Dorsolateral prefrontal cortex (tissue), 120 donors: ENCODE measurements at regions of chr3 and their contacts with region 1.

Region 1: GRCh38 chr3:57755668-57756527 is at the start of gene SLMAP:
- DNase-seq: peak; percentile 94 to 98 (median 97)
- H3K4me3 ChIP-seq: peak within 1 kb of the TSS; percentile 61 to 98 (median 89)
- H3K27ac ChIP-seq: peak within 1 kb of the TSS; percentile 60 to 98 (median 92)
- H3K27me3 ChIP-seq: no peaks in the 10 kb centered on the region
- CTCF ChIP-seq: peak in 18 of 56 donors; percentile 7 to 49 (median 28)
- total RNA-seq, gene SLMAP: 48.2 to 101 (median 69.5) TPM

Region 2: DNA sequence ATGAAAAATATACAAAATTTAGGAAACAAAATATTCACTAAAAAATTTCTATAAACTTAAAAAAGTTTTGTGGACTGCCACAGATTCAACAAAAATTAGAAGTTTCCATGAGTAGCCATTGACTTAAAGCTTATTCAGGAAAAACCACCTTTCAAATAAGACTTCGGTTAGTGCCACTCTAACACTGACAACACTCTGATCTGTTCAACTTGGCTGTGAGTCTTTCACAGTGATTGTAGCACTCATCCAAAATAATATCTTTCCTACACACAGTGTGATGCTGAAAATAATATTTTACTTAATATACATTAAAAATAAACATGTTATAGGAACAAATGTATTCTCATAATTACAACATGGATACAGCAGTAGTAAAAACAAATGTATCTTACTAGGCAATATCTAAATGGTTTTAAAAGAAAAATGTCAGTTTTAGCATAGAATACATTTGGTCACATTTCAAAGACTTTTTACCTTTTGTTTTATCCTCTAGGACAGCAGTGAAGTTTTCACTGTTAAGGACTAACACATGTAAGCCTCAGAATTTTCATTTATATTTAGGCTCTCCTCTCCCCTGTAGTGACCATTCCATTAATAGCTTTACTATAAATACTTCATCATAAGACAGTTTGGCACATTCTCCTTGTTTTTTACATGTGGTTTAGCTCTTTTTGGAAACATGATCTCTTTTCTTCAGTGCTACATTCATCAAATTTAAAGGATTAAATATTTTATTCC is 463.6 kb before region 1 on chr3 and contains the start of gene ASB14:
- intact Hi-C with region 1: no loop called
- DNase-seq: no peak
- H3K4me3 ChIP-seq: no peak within 1 kb of the TSS
- H3K27ac ChIP-seq: no peak within 1 kb of the TSS
- H3K27me3 ChIP-seq: peaks cover 0 to 21% (median 0%) of the 10 kb centered on the region in 45 donors
- CTCF ChIP-seq: no peak
- total RNA-seq, gene ASB14: 0.15 to 0.54 (median 0.24) TPM in 4 of 120 experiments, not detected in the others

Region 3: GRCh38 chr3:57692259-57693147 is 63.4 kb before region 1 on chr3 and contains the start of gene DENND6A:
- intact Hi-C with region 1: loop called (anchors 1 kb)
- DNase-seq: peak; percentile 23 to 97 (median 95)
- H3K4me3 ChIP-seq: peak within 1 kb of the TSS; percentile 57 to 100 (median 95)
- H3K27ac ChIP-seq: peak within 1 kb of the TSS; percentile 70 to 99 (median 97)
- H3K27me3 ChIP-seq: no peaks in the 10 kb centered on the region
- CTCF ChIP-seq: peak in 23 of 56 donors; percentile 1 to 59 (median 26)
- total RNA-seq, gene DENND6A: 13.1 to 41.8 (median 28.0) TPM

Region 4: DNA sequence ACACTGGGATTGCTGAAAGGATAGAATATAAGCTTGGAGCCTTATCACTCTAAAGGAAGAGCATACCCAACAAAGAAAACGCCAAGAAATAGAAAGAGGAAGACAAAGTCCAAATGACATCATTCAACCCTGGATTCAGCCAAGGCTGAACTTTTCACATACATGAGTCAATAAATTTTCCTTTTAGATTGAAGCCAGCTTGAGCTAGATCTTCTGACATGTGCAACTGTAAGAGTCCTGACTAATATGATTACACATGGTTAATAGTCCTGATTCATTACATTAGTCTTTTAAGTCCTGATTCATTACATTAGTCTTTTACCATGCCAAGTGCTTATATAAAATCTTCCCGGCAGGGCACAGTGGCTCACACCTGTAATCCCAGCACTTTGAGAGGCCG is 49.4 kb before region 1 on chr3:
- intact Hi-C with region 1: no loop called
- DNase-seq: no peak
- H3K4me3 ChIP-seq: no peak overlapping the region
- H3K27ac ChIP-seq: no peak overlapping the region
- H3K27me3 ChIP-seq: peaks cover 0 to 4% (median 0%) of the 10 kb centered on the region in 45 donors
- CTCF ChIP-seq: no peak

Region 5: DNA sequence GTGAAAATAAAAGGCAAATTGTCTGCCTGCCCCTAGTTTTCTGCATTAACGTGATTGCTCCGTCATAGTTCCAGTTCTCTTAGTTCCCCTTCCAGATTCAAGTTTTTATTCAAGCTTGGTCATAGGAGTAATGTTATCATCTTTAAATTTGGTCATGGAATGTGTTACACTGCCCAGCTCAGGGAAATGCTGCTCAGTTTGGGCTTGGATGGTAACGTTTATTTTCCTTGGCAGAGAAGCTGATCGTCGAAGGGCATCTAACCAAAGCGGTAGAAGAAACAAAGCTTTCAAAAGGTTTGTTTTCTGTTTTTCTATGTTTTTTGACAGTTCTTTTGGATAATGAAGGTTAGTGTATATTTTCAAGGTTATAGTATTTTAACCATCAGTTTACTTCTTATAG is 133.9 kb after region 1 on chr3:
- intact Hi-C with region 1: no loop called
- DNase-seq: no peak
- H3K4me3 ChIP-seq: peak overlapping the region in 15 of 59 donors; percentile 2 to 35 (median 11)
- H3K27ac ChIP-seq: peak overlapping the region in 10 of 59 donors; percentile 7 to 59 (median 16)
- H3K27me3 ChIP-seq: no peaks in the 10 kb centered on the region
- CTCF ChIP-seq: no peak